Cardiac septum (tissue), 1 donor: ENCODE measurements at regions of chr5 and their contacts with region 1.

Region 1: GRCh38 chr5:131796793-131797693 is at the start of gene FNIP1:
- DNase-seq: peak; percentile 100
- total RNA-seq, gene FNIP1: 31.6 TPM

Region 2: GRCh38 chr5:131634996-131635754 is 161.9 kb before region 1 on chr5 and contains the start of gene RAPGEF6:
- intact Hi-C with region 1: loop called (anchors 1 kb)
- DNase-seq: peak; percentile 98
- total RNA-seq, gene RAPGEF6: 15.6 TPM

Region 3: DNA sequence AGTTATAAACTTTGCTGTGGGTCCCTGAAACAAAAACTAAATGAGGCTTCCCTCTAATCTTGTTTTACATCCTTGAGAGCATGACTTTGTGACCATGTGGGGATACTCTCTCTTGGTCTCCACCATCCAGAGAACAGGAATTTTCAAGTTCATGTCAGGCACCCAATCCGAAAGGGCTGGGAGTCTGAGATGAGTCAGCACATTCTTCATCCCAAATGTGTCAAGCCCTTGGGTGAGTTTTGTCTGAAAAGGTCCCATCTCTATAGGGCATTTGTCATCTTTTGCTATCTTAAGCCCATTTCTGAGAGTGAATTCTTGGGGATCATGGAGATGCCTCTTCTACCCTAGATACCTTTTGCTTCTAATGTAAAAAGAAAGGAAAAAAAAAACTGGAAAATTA is 135.1 kb before region 1 on chr5:
- intact Hi-C with region 1: no loop called
- DNase-seq: no peak

Region 4: GRCh38 chr5:131671994-131672655 is 124.9 kb before region 1 on chr5:
- intact Hi-C with region 1: loop called (anchors 2 kb)
- DNase-seq: no peak

Region 5: GRCh38 chr5:131758520-131758900 is 38.5 kb before region 1 on chr5:
- intact Hi-C with region 1: loop called (anchors 2 kb)
- DNase-seq: no peak

Region 6: GRCh38 chr5:132215329-132215728 is 418.3 kb after region 1 on chr5:
- intact Hi-C with region 1: loop called (anchors 10 kb)
- DNase-seq: peak; percentile 93